Mammary epithelial cell (primary cell): ENCODE measurements at regions of chr2 and their contacts with region 1.

Region 1: GRCh38 chr2:66429071-66429477 is 5.9 kb upstream of the MEIS1 start:
- DNase-seq: peak; percentile 41
- H3K4me3 ChIP-seq: no peak overlapping the region
- H3K27ac ChIP-seq: no peak overlapping the region
- H3K4me1 ChIP-seq: peaks cover 4% of the 10 kb centered on the region
- H3K27me3 ChIP-seq: peaks cover 23% of the 10 kb centered on the region
- CTCF ChIP-seq: peak; percentile 93 to 95

Region 2: DNA sequence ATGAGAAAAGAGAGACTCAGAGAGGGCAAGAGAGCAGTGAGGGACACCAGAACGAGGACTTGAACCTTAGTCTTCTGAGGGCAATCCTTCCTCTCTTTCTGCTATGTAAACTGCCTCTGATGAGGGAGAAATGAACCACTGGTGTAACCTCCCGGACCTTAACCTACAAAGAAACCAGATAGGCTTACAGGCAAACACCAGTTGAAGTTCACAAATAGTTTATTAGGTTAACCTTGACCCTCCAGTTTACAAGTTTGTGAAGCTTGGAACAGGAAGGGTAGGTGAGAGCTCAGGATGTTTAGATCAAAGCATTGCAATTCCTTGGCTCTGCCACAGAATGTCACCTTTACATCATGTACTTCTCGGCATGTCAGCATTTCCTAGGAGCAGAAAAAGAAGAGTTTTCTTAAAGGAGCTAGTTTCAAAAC is 510.3 kb before region 1 on chr2:
- CTCF ChIA-PET with region 1: no interaction called
- dilution Hi-C with region 1: no loop called
- in situ Hi-C with region 1: no loop called
- intact Hi-C with region 1: loop called (anchors 2 kb)
- DNase-seq: no peak
- H3K4me3 ChIP-seq: no peak overlapping the region
- H3K27ac ChIP-seq: no peak overlapping the region
- H3K4me1 ChIP-seq: no peaks in the 10 kb centered on the region
- H3K27me3 ChIP-seq: no peaks in the 10 kb centered on the region
- CTCF ChIP-seq: peak in 1 of 2 donors; percentile 22

Region 3: DNA sequence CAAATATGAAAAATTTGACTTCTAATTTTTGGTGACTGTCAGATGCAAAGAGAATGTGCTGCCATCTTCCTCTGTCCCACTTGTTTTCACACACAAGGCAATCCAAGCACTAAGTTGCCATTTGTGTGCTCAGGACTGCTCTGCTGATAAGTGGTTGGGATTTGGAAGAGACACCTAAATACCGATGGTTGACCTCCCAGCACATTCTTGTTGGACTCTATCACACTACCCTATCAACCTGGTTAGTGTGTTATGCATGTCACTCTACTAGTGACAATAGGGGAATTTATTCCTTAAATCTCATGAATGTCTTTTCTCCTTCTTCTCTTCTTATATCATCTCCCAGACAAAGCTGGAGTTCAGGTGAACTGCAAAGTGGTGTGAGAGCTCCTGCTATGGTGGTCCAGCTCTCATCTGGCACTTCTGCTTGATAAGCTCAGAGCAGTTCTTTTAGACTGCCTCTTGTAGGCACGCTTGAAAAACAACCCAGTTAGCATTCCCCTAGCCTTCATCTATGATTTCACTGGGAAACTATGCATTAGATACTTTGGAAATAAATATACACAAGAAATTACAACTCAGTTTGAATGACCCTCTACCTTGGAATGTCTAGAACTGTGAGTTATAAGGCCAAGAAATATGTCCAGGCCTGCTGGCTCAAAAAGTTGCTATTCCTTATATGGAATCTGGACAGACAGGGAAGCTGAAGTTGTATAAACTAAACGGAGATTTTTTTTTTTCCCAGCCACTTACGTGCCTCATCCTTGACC is 410.7 kb after region 1 on chr2:
- CTCF ChIA-PET with region 1: no interaction called
- dilution Hi-C with region 1: no loop called
- in situ Hi-C with region 1: no loop called
- intact Hi-C with region 1: no loop called
- DNase-seq: peak; percentile 95
- H3K4me3 ChIP-seq: no peak overlapping the region
- H3K27ac ChIP-seq: peak overlapping the region; percentile 76
- H3K4me1 ChIP-seq: peaks cover 25% of the 10 kb centered on the region
- H3K27me3 ChIP-seq: no peaks in the 10 kb centered on the region
- CTCF ChIP-seq: no peak

Region 4: GRCh38 chr2:67215214-67216055 is 786.4 kb after region 1 on chr2:
- CTCF ChIA-PET with region 1: no interaction called
- dilution Hi-C with region 1: loop called (anchors 25 kb)
- in situ Hi-C with region 1: loop called (anchors 25 kb)
- intact Hi-C with region 1: loop called (anchors 1 kb)
- DNase-seq: peak; percentile 46
- H3K4me3 ChIP-seq: no peak overlapping the region
- H3K27ac ChIP-seq: no peak overlapping the region
- H3K4me1 ChIP-seq: no peaks in the 10 kb centered on the region
- H3K27me3 ChIP-seq: no peaks in the 10 kb centered on the region
- CTCF ChIP-seq: peak; percentile 49 to 71

Region 5: DNA sequence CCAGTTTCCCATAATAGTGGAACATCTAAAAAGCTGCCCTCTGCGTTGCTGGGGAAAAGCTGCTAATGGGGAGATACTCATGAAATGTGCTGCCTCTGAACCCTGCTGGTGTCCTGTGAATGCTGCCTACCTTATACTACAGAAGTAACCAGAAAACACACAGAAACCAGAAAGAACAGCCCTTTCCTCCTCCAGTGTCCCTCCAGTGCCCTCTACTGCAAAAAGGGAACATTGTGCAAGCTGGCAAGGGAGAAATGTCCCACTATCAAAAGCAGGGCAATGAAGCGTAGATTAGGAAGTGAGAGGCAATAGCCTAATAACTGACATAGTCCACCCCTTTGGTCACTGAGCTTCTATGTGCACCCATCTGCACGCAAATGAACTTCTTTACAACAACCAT is 805.4 kb after region 1 on chr2:
- CTCF ChIA-PET with region 1: no interaction called
- dilution Hi-C with region 1: no loop called
- in situ Hi-C with region 1: no loop called
- intact Hi-C with region 1: loop called (anchors 2 kb)
- DNase-seq: peak; percentile 17
- H3K4me3 ChIP-seq: no peak overlapping the region
- H3K27ac ChIP-seq: no peak overlapping the region
- H3K4me1 ChIP-seq: no peaks in the 10 kb centered on the region
- H3K27me3 ChIP-seq: no peaks in the 10 kb centered on the region
- CTCF ChIP-seq: peak in 1 of 2 donors; percentile 53